Spleen (tissue), 13 donors: ENCODE measurements at regions of chr11 and their contacts with region 1.

Region 1: GRCh38 chr11:64935359-64936081 is at the start of gene GPHA2:
- DNase-seq: no peak
- H3K4me3 ChIP-seq: no peak within 1 kb of the TSS
- H3K27ac ChIP-seq: no peak within 1 kb of the TSS
- H3K4me1 ChIP-seq: no peaks in the 10 kb centered on the region
- H3K27me3 ChIP-seq: no peaks in the 10 kb centered on the region
- CTCF ChIP-seq: no peak
- POLR2A ChIP-seq: no peak
- total RNA-seq, gene GPHA2: not detected

Region 2: GRCh38 chr11:64996710-64997380 is 61.3 kb after region 1 on chr11 and contains the start of gene BATF2:
- intact Hi-C with region 1: loop called (anchors 10 kb)
- DNase-seq: peak; percentile 91
- H3K4me3 ChIP-seq: peak within 1 kb of the TSS; percentile 43 to 77 (median 57)
- H3K27ac ChIP-seq: peak within 1 kb of the TSS; percentile 65 to 87 (median 80)
- H3K4me1 ChIP-seq: peaks cover 16 to 81% (median 45%) of the 10 kb centered on the region in 6 donors
- H3K27me3 ChIP-seq: no peaks in the 10 kb centered on the region
- CTCF ChIP-seq: peak; percentile 9 to 77 (median 60)
- POLR2A ChIP-seq: peak in 1 of 3 donors; percentile 83
- total RNA-seq, gene BATF2: 8.5 to 23.1 (median 18.6) TPM